Activated CD4-positive, alpha-beta memory T cell treated with anti-CD3 and anti-CD28 coated beads for 36 hours (primary cell): ENCODE measurements at regions of chr3 and their contacts with region 1.

Region 1: DNA sequence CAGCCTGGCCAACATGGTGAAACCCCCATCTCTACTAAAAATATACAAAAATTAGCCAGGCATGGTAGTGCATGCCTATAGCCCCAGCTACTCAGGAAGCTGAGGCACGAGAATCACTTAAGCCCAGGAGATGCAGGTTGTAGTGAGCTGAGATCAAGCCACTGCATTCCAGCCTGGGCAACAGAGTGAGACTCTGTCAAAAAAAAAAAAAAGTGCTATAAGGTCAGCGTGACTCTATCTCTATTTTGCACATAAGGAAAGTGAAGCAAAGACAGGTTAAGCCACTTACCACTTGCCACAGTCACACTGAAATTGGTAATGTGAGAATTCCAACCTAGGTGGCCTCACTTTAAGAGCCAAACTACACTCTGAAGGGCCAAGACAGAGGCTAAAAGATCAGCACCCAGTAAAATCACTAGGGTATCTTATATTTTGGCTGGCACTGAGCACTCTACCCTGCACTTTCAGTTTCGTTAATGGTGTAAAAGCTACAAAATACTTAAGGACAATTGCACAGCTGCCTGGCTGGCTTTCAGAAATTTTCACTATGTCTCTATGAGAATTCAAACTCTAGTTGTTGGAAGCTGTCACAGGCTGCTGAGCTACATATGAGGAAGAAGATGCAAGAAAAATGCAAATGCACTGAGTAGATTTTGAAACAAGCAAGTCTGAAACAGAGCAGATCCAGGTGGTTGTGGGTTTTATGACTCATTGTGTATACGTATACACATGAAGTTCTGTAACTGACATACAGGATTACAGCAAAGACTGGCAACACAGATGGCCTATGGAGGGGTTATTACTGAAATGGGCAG is 32.7 kb downstream of the TRANK1 start:
- DNase-seq: peak; percentile 47
- H3K4me3 Mint-ChIP-seq: peak overlapping the region; percentile 59
- H3K27ac Mint-ChIP-seq: peak overlapping the region; percentile 81
- H3K4me1 Mint-ChIP-seq: peaks cover 41% of the 10 kb centered on the region
- H3K27me3 Mint-ChIP-seq: no peaks in the 10 kb centered on the region

Region 2: DNA sequence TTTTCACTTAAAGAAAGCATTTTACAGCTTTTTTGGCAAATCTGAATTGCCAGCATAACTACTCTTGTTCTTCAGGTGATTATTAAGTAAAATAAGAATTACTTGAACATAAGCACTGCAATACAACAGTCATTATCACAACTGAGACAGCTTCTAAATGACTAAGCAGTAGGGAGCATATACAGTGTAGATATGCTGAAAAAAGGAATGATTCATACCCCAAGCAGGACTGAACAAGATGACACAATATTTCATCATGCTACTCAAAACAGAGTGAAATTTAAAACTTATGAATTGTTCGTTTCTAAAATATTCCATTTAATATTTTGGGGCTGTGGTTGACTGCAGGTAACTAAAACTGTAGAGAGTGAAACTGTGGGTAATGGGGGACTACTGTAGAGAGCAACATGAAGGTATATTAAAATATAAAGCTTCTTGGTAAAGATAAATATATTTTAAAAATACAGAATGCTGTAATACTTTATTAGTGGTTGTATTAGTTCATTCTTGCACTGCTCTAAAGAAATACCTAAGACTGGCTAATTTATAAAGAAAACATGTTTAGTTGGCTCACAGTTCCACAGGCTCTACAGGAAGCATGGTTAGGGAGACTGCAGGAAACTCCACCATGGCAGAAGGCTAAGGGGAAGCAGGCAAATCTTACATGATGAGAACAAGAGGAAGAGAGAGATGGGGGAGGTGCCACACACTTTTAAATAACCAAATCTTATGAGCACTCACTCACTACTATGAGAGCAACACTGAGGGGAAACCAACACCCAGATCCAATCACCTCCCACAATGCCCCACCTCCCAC is 232.6 kb before region 1 on chr3:
- CTCF ChIA-PET with region 1: no interaction called
- POLR2A ChIA-PET with region 1: no interaction called
- intact Hi-C with region 1: loop called (anchors 1 kb)
- DNase-seq: no peak
- H3K4me3 Mint-ChIP-seq: no peak overlapping the region
- H3K27ac Mint-ChIP-seq: no peak overlapping the region
- H3K4me1 Mint-ChIP-seq: no peaks in the 10 kb centered on the region
- H3K27me3 Mint-ChIP-seq: peaks cover 3% of the 10 kb centered on the region

Region 3: GRCh38 chr3:36876181-36876936 is 35.8 kb before region 1 on chr3:
- CTCF ChIA-PET with region 1: interaction called, 5 read pairs
- POLR2A ChIA-PET with region 1: interaction called, 5 read pairs
- intact Hi-C with region 1: loop called (anchors 1 kb)
- DNase-seq: peak; percentile 26
- H3K4me3 Mint-ChIP-seq: peak overlapping the region; percentile 21
- H3K27ac Mint-ChIP-seq: peak overlapping the region; percentile 71
- H3K4me1 Mint-ChIP-seq: peaks cover 42% of the 10 kb centered on the region
- H3K27me3 Mint-ChIP-seq: peaks cover 3% of the 10 kb centered on the region

Region 4: DNA sequence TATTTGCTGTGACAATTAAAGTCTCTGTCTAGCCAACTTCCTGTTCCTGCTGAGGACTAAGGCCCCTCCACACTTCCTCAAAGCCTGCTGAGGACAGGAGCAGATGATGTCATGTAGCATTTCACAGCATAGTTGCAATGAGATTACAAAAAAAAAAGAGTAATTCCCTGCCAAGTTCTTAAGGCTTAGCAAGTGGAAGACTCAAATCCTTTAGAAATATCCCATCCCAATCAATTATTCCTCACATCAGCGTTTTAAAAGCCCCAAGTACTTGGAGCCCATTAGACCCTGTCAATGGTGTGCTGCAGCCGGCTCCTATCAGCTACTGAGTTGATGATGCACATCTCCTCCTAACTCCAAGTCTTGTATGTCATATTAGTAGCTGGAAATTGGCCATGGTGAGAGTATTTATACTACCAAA is 19.1 kb before region 1 on chr3:
- CTCF ChIA-PET with region 1: interaction called, 3 read pairs
- POLR2A ChIA-PET with region 1: no interaction called
- intact Hi-C with region 1: loop called (anchors 2 kb)
- DNase-seq: no peak
- H3K4me3 Mint-ChIP-seq: no peak overlapping the region
- H3K27ac Mint-ChIP-seq: peak overlapping the region; percentile 74
- H3K4me1 Mint-ChIP-seq: peaks cover 46% of the 10 kb centered on the region
- H3K27me3 Mint-ChIP-seq: no peaks in the 10 kb centered on the region

Region 5: DNA sequence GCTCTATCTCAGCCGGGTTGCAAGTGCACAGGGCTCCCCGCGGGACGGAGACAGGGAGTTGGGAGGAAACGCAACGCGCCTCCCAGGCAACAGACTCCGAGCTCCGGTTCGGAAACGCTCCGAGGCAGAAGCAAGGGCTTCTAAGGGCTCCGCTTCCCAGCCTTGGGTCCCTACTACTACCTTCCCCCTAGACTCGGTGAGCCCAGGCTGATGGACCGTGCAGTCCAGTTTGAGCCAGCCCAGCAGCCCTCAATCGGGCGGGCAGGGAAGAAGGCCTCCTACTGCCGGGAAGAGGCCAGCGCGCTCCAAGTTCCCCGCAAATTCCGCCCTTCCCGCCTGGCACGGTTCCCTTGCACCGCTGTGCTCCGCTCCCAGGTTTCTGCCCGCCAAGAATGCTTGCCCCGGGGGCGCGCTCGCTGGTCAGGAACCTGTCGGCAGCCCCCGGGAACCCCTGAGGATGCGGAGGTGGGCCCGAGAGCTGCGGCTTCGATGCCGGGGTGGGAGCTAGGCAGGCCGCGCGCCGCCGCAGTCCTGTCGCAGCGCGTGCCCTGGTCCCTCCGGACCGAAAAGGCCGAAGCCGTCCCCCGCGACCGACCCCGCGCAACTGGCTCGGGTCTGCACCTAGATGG is 31.9 kb after region 1 on chr3:
- CTCF ChIA-PET with region 1: interaction called, 5 read pairs
- POLR2A ChIA-PET with region 1: interaction called, 8 read pairs
- intact Hi-C with region 1: loop called (anchors 1 kb)
- DNase-seq: peak; percentile 50
- H3K4me3 Mint-ChIP-seq: peak overlapping the region; percentile 80
- H3K27ac Mint-ChIP-seq: no peak overlapping the region
- H3K4me1 Mint-ChIP-seq: peaks cover 16% of the 10 kb centered on the region
- H3K27me3 Mint-ChIP-seq: no peaks in the 10 kb centered on the region